AG04449 (cell line): ENCODE measurements at regions of chr13 and their contacts with region 1.

Region 1: DNA sequence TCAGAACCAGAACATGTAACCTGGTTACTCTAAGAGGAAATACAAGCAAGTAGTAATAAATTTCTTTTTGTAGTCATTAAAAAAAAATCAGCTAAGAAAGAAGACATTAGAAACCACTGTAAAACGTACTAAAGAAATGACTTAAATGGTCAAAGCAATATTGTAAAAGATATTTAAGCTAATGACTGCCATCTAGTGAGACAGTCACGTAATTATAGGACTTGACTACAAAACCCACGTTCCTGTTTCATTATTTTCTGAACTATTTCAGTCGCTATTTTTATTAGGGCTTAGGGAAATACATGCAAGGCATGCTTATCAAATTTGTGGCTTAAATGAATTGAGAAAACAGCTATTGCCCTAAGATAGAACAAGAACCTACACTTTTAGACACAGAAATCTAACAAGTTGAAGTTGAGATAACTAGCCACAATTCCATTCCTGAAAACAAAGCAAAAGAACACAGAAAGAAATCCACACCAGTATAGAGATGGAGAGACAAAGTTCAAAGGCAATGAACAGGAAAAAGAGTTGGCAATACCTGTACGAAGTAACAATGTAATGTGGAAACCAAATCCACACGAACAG is 17.9 kb downstream of the ALG5 start:
- DNase-seq: no peak
- H3K4me3 ChIP-seq: no peak overlapping the region
- CTCF ChIP-seq: peak; percentile 23

Region 2: DNA sequence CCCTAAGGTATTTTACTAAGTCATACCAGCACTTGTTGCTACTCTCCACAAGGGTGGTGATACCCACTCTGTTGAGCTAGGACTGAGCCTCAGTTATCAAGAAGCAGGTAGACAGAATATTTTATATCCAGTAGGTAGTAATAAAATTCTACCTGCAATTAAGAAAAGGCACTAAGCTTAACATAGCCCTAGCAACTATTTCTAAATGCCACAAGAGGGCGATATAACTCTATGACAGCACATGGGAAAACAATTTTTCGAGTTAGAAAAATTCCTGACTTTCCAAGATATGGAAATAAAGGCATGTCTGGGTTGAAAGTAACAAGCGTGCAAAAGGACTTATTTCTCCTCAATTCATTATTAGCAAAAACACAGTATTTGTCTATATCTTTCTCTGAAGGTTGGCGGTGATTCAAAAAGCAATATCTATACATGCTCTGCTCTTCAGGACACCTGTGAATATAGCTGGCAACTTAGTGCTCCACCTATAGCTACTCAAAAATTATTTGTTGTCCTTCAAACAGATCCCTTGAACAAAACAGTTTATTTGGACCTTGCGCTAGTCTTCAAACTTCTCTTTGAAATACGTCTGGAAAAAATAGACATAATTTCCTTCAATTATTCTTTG is 698.3 kb before region 1 on chr13:
- CTCF ChIA-PET with region 1: interaction called, 10 read pairs
- POLR2A ChIA-PET with region 1: no interaction called
- DNase-seq: no peak
- H3K4me3 ChIP-seq: no peak overlapping the region
- CTCF ChIP-seq: peak; percentile 55

Region 3: DNA sequence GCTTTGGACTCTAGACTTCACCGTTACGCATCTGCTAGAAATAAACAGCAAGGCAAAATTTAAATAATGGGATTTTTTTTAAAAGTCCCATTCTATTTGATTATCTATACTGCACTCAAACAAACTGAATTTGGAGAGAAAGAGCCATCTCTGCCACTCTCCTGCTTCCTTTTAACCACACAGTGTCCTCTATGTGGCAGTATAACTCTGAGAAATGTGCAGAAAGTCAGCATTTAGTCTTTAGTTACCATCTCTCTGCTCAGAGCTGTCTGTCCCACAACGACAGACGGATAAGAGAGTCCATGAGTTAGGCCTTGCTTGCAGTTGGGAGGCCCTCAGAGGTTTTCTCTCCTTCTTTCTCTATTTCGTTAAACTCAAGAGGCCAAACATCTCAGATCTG is 527.7 kb before region 1 on chr13:
- CTCF ChIA-PET with region 1: interaction called, 37 read pairs
- POLR2A ChIA-PET with region 1: no interaction called
- DNase-seq: no peak
- H3K4me3 ChIP-seq: no peak overlapping the region
- CTCF ChIP-seq: peak; percentile 24

Region 4: GRCh38 chr13:36866232-36866631 is 115.0 kb before region 1 on chr13:
- CTCF ChIA-PET with region 1: interaction called, 332 read pairs
- POLR2A ChIA-PET with region 1: no interaction called
- DNase-seq: no peak
- H3K4me3 ChIP-seq: no peak overlapping the region
- CTCF ChIP-seq: no peak

Region 5: DNA sequence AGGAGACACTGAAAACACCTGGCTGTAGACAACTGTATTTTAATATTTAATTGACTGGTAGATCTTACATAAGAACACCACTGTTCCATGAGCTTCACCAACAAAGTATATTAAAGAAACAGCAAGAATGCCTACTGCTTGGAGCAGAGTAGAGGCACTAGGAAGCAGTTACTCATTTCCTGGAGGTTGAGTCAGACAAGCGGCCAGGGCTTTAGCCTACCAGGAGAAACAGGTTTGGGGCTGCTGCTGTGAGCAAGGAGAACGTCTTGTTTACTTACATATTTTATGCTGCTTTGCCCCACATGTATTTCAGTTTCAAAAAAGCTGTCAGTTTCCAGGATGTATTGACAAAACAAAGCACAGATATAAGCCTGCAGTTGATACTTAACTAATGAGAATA is 15.5 kb before region 1 on chr13:
- CTCF ChIA-PET with region 1: interaction called, 50 read pairs
- POLR2A ChIA-PET with region 1: no interaction called
- DNase-seq: peak; percentile 41
- H3K4me3 ChIP-seq: no peak overlapping the region
- CTCF ChIP-seq: no peak

Region 6: GRCh38 chr13:36999054-36999714 is 17.9 kb after region 1 on chr13 and contains the start of gene ALG5:
- CTCF ChIA-PET with region 1: interaction called, 72 read pairs
- POLR2A ChIA-PET with region 1: interaction called, 3 read pairs
- DNase-seq: no peak
- H3K4me3 ChIP-seq: peak within 1 kb of the TSS; percentile 93
- CTCF ChIP-seq: peak; percentile 90

Region 7: DNA sequence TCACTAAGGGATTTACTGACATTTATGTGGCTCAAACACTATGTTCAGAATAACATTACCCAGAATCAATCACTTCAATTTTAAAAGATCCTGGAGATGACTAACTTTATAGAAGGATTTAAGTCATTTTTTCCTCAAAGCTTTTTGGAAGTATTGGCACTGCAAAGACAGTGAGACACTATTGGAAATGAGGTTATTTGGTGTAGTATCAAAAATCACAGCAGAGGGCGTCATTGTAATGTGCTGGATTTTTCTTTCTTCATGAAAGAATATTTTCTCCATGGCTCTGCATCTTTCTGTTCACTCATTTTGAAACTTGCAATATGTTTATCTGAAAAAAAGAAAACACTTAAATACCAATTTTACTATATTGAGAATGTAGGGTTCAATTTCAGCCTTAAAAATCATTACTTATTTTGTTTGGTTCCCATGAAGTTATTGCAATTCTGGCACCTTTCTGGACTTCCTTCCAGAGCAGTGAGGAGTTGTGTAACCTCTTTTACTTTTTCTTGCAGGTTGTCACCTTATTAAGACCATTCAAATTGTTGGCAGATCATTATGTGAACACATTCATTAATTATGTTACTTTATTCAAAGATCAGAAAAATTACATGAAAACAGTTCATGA is 127.9 kb after region 1 on chr13:
- CTCF ChIA-PET with region 1: no interaction called
- POLR2A ChIA-PET with region 1: no interaction called
- DNase-seq: no peak
- H3K4me3 ChIP-seq: no peak overlapping the region
- CTCF ChIP-seq: peak; percentile 45